Uterus (tissue), 4 donors: ENCODE measurements at regions of chr19 and their contacts with region 1.

Region 1: GRCh38 chr19:10388957-10389356 is 8.6 kb upstream of the TYK2 start:
- DNase-seq: peak; percentile 86 to 91
- H3K4me3 ChIP-seq: no peak overlapping the region
- H3K27ac ChIP-seq: no peak overlapping the region
- H3K4me1 ChIP-seq: peaks cover 0 to 6% of the 10 kb centered on the region in 2 donors
- H3K27me3 ChIP-seq: no peaks in the 10 kb centered on the region
- CTCF ChIP-seq: peak; percentile 88 to 91 (median 88)
- POLR2A ChIP-seq: no peak

Region 2: GRCh38 chr19:10269333-10270179 is 119.4 kb before region 1 on chr19:
- intact Hi-C with region 1: loop called (anchors 2 kb)
- DNase-seq: peak; percentile 82 to 84
- H3K4me3 ChIP-seq: peak overlapping the region; percentile 11 to 31
- H3K27ac ChIP-seq: peak overlapping the region; percentile 67 to 71
- H3K4me1 ChIP-seq: no peaks in the 10 kb centered on the region
- H3K27me3 ChIP-seq: peaks cover 0 to 8% of the 10 kb centered on the region in 2 donors
- CTCF ChIP-seq: peak; percentile 91 to 96 (median 95)
- POLR2A ChIP-seq: peak in 1 of 2 donors; percentile 7

Region 3: GRCh38 chr19:10353793-10354391 is 35.1 kb before region 1 on chr19:
- intact Hi-C with region 1: no loop called
- DNase-seq: peak; percentile 32 to 49
- H3K4me3 ChIP-seq: no peak overlapping the region
- H3K27ac ChIP-seq: peak overlapping the region in 1 of 2 donors; percentile 22
- H3K4me1 ChIP-seq: no peaks in the 10 kb centered on the region
- H3K27me3 ChIP-seq: no peaks in the 10 kb centered on the region
- CTCF ChIP-seq: no peak
- POLR2A ChIP-seq: no peak

Region 4: GRCh38 chr19:10580979-10581631 is 192.1 kb after region 1 on chr19:
- intact Hi-C with region 1: no loop called
- DNase-seq: peak; percentile 89 to 90
- H3K4me3 ChIP-seq: no peak overlapping the region
- H3K27ac ChIP-seq: no peak overlapping the region
- H3K4me1 ChIP-seq: no peaks in the 10 kb centered on the region
- H3K27me3 ChIP-seq: no peaks in the 10 kb centered on the region
- CTCF ChIP-seq: peak; percentile 97 to 100 (median 99)
- POLR2A ChIP-seq: peak in 1 of 2 donors; percentile 24